HepG2 (cell line): ENCODE measurements at regions of chr6 and their contacts with region 1.

Region 1: DNA sequence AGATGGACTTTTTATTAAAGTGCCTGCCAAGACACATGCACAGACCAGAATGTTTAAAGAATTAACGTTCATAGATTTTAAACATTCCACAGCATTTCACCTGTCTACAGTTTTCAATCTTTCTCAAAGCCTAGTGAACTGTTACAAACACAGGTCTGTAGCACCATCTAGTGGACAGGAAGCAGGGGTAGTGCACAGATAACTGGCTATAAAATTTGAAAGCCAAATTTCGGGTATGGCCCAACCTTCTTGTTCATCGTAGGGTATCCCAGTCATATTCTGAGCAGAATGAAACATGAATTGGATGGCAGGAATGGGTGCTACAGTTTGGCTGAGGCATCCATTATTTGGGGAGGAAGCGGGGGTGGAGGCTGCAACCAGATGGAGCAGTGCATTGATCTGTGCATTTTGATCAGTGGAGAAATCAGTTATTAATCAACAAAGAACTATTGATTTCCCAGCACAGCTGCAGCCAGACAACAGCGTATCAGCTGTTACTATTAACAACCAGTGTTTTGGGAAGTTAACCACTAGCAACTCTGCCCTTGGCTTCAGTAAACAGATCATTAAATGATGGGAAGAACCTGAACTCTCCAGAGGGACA is 56.1 kb upstream of the B3GAT2 start:
- DNase-seq: peak; percentile 57
- ATAC-seq: peak; percentile 94
- H3K4me3 ChIP-seq: no peak overlapping the region
- H3K27ac ChIP-seq: no peak overlapping the region
- H3K4me1 ChIP-seq: no peaks in the 10 kb centered on the region
- H3K27me3 ChIP-seq: no peaks in the 10 kb centered on the region
- CTCF ChIP-seq: peak; percentile 82
- EP300 ChIP-seq: no peak
- POLR2A ChIP-seq: no peak
- RAD21 ChIP-seq: peak; percentile 55; the same call in 1 of the 2 replicates

Region 2: GRCh38 chr6:70221025-70221714 is 791.8 kb before region 1 on chr6:
- CTCF ChIA-PET with region 1: no interaction called
- POLR2A ChIA-PET with region 1: no interaction called
- in situ Hi-C with region 1: no loop called
- intact Hi-C with region 1: loop called (anchors 5 kb)
- DNase-seq: peak; percentile 12
- ATAC-seq: peak; percentile 84
- H3K4me3 ChIP-seq: peak overlapping the region in 1 of 3 experiments; percentile 10; a peak in 1 of 6 replicates
- H3K27ac ChIP-seq: no peak overlapping the region
- H3K4me1 ChIP-seq: peaks cover 16% of the 10 kb centered on the region
- H3K27me3 ChIP-seq: peaks cover 0 to 4% of the 10 kb centered on the region in 2 experiments; a peak in 1 of 5 replicates
- CTCF ChIP-seq: peak; percentile 66
- EP300 ChIP-seq: no peak
- POLR2A ChIP-seq: no peak
- RAD21 ChIP-seq: 0 out of 2 replicates have a peak, but pooled peaks have one; percentile 35

Region 3: GRCh38 chr6:70310063-70310694 is 702.8 kb before region 1 on chr6:
- CTCF ChIA-PET with region 1: interaction called, 4 read pairs
- POLR2A ChIA-PET with region 1: no interaction called
- in situ Hi-C with region 1: loop called (anchors 10 kb)
- intact Hi-C with region 1: loop called (anchors 2 kb)
- DNase-seq: peak; percentile 33
- ATAC-seq: no peak
- H3K4me3 ChIP-seq: no peak overlapping the region
- H3K27ac ChIP-seq: no peak overlapping the region
- H3K4me1 ChIP-seq: no peaks in the 10 kb centered on the region
- H3K27me3 ChIP-seq: no peaks in the 10 kb centered on the region
- CTCF ChIP-seq: peak; percentile 68
- EP300 ChIP-seq: no peak
- POLR2A ChIP-seq: no peak
- RAD21 ChIP-seq: 0 out of 2 replicates have a peak, but pooled peaks have one; percentile 35

Region 4: GRCh38 chr6:70436320-70436719 is 576.6 kb before region 1 on chr6:
- CTCF ChIA-PET with region 1: no interaction called
- POLR2A ChIA-PET with region 1: no interaction called
- in situ Hi-C with region 1: no loop called
- intact Hi-C with region 1: loop called (anchors 5 kb)
- DNase-seq: no peak
- ATAC-seq: no peak
- H3K4me3 ChIP-seq: no peak overlapping the region
- H3K27ac ChIP-seq: no peak overlapping the region
- H3K4me1 ChIP-seq: no peaks in the 10 kb centered on the region
- H3K27me3 ChIP-seq: no peaks in the 10 kb centered on the region
- CTCF ChIP-seq: no peak
- EP300 ChIP-seq: no peak
- POLR2A ChIP-seq: no peak
- RAD21 ChIP-seq: no peak

Region 5: GRCh38 chr6:70706491-70707123 is 306.4 kb before region 1 on chr6:
- CTCF ChIA-PET with region 1: no interaction called
- POLR2A ChIA-PET with region 1: no interaction called
- in situ Hi-C with region 1: loop called (anchors 10 kb)
- intact Hi-C with region 1: loop called (anchors 1 kb)
- DNase-seq: peak; percentile 20
- ATAC-seq: no peak
- H3K4me3 ChIP-seq: no peak overlapping the region
- H3K27ac ChIP-seq: no peak overlapping the region
- H3K4me1 ChIP-seq: no peaks in the 10 kb centered on the region
- H3K27me3 ChIP-seq: no peaks in the 10 kb centered on the region
- CTCF ChIP-seq: peak; percentile 53
- EP300 ChIP-seq: no peak
- POLR2A ChIP-seq: no peak
- RAD21 ChIP-seq: peak; percentile 45; the same call in 1 of the 2 replicates

Region 6: DNA sequence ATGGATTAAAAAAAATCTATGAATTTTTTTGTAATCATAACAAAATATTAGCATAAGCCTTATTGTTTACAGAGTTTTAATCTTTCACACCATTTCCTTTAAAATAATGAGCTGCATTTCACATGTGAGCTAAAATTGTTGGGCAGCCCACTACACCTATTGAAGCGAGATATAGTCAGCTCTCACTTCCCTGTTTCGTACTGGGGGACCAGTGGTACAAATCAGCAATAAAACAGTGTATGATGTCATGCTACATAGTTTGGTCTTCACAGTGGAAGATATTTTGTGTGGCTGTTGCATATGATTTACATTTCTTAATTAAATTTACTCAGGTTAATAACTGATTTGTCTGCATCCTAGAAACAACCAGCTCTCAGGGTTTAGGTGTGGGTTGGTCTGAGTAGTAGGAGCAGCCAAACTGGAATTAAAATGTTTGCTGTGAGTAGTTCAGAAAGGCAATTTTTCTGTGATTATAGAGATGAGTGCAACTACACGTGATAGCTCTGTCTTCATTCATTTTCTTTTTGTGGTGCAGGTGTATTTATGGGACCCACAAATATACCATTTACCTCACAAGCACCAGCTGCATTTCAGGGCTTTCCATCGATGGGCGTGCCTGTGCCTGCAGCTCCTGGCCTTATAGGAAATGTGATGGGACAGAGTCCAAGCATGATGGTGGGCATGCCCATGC is 155.4 kb before region 1 on chr6:
- CTCF ChIA-PET with region 1: no interaction called
- POLR2A ChIA-PET with region 1: no interaction called
- in situ Hi-C with region 1: no loop called
- intact Hi-C with region 1: no loop called
- DNase-seq: no peak
- ATAC-seq: no peak
- H3K4me3 ChIP-seq: no peak overlapping the region
- H3K27ac ChIP-seq: no peak overlapping the region
- H3K4me1 ChIP-seq: peaks cover 14% of the 10 kb centered on the region
- H3K27me3 ChIP-seq: no peaks in the 10 kb centered on the region
- CTCF ChIP-seq: no peak
- EP300 ChIP-seq: no peak
- POLR2A ChIP-seq: no peak
- RAD21 ChIP-seq: no peak

Region 7: GRCh38 chr6:71533939-71534379 is 521.0 kb after region 1 on chr6:
- CTCF ChIA-PET with region 1: no interaction called
- POLR2A ChIA-PET with region 1: no interaction called
- in situ Hi-C with region 1: no loop called
- intact Hi-C with region 1: no loop called
- DNase-seq: peak; percentile 2
- ATAC-seq: no peak
- H3K4me3 ChIP-seq: no peak overlapping the region
- H3K27ac ChIP-seq: no peak overlapping the region
- H3K4me1 ChIP-seq: no peaks in the 10 kb centered on the region
- H3K27me3 ChIP-seq: peaks cover 0 to 1% of the 10 kb centered on the region in 2 experiments; a peak in 1 of 5 replicates
- CTCF ChIP-seq: peak; percentile 43
- EP300 ChIP-seq: no peak
- POLR2A ChIP-seq: no peak
- RAD21 ChIP-seq: no peak